Activated CD8-positive, alpha-beta T cell treated with anti-CD3 and anti-CD28 coated beads for 36 hours (primary cell): ENCODE measurements at regions of chr11 and their contacts with region 1.

Region 1: GRCh38 chr11:47152953-47153950 is 23.4 kb downstream of the ARFGAP2 start:
- DNase-seq: peak; percentile 69
- ATAC-seq: peak; percentile 74
- H3K4me3 Mint-ChIP-seq: no peak overlapping the region
- H3K27ac Mint-ChIP-seq: peak overlapping the region; percentile 70
- H3K4me1 Mint-ChIP-seq: peaks cover 27% of the 10 kb centered on the region
- H3K27me3 Mint-ChIP-seq: no peaks in the 10 kb centered on the region
- CTCF ChIP-seq: peak; percentile 99

Region 2: GRCh38 chr11:46637546-46637945 is 515.7 kb before region 1 on chr11:
- CTCF ChIA-PET with region 1: no interaction called
- POLR2A ChIA-PET with region 1: no interaction called
- intact Hi-C with region 1: no loop called
- DNase-seq: no peak
- ATAC-seq: no peak
- H3K4me3 Mint-ChIP-seq: no peak overlapping the region
- H3K27ac Mint-ChIP-seq: no peak overlapping the region
- H3K4me1 Mint-ChIP-seq: peaks cover 12% of the 10 kb centered on the region
- H3K27me3 Mint-ChIP-seq: no peaks in the 10 kb centered on the region
- CTCF ChIP-seq: no peak

Region 3: DNA sequence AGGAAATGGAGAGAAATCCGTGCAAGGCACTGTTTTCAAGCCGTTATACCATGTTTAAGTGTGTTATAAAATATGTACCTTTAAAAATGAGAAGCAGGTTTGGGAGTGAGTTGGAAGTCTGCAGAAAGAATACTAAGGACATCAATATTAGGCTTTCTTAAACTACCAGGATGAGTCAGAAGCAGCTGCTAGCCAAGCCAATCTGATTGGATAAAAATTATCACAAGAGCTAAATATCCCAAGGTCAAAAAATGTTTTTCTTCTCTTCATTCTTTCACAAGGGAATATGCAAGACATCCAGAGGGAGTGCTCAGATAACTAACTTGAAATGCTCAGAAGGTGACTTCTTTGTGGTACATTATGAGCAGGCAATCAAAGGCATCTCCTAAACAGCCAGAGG is 287.9 kb before region 1 on chr11:
- CTCF ChIA-PET with region 1: interaction called, 12 read pairs
- POLR2A ChIA-PET with region 1: no interaction called
- intact Hi-C with region 1: no loop called
- DNase-seq: no peak
- ATAC-seq: no peak
- H3K4me3 Mint-ChIP-seq: no peak overlapping the region
- H3K27ac Mint-ChIP-seq: no peak overlapping the region
- H3K4me1 Mint-ChIP-seq: no peaks in the 10 kb centered on the region
- H3K27me3 Mint-ChIP-seq: peaks cover 3% of the 10 kb centered on the region
- CTCF ChIP-seq: no peak

Region 4: GRCh38 chr11:46889689-46890475 is 263.4 kb before region 1 on chr11:
- CTCF ChIA-PET with region 1: interaction called, 38 read pairs
- POLR2A ChIA-PET with region 1: no interaction called
- intact Hi-C with region 1: loop called (anchors 1 kb)
- DNase-seq: peak; percentile 88
- ATAC-seq: peak; percentile 97
- H3K4me3 Mint-ChIP-seq: no peak overlapping the region
- H3K27ac Mint-ChIP-seq: no peak overlapping the region
- H3K4me1 Mint-ChIP-seq: no peaks in the 10 kb centered on the region
- H3K27me3 Mint-ChIP-seq: no peaks in the 10 kb centered on the region
- CTCF ChIP-seq: peak; percentile 81

Region 5: DNA sequence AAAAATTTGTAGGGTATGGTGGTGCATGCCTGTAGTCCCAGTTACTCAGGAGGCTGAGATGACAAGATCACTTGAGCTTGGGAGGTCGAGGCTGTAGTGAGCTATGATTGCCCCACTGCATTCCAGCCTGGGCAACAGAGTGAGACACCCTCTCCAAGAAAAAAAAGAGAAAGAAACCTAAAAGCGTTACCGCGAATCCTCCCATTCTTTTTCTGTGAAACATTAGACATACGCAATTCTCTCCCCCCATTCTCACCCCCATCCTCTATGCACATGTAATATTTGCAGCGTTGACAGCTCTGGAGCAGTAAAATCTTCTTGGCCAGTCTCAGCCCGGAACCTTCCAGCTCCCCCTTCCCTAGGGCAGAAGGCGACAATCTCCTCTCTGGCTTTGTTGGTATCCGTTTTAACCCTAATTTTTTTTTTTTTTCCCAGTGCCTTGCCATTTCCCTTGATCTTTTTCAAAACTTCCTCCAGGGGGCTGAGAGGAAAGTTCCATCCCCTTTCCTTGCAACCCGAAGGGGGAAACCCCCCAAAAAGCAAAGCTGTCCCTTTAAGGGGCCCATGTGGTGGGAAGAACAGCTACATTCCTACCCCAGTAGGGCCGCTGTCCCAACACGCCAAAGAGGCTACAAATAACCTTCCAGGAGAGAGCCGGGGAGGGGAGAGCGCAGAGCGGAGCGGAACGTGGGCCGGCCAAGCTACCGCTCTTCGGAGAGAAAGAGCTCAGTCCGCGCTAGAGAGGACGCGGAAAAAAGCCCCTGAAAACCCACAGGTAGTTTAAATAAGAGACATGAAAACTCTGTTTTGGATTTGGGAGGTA is 236.8 kb before region 1 on chr11:
- CTCF ChIA-PET with region 1: interaction called, 33 read pairs
- POLR2A ChIA-PET with region 1: no interaction called
- intact Hi-C with region 1: no loop called
- DNase-seq: peak; percentile 37
- ATAC-seq: peak; percentile 43
- H3K4me3 Mint-ChIP-seq: peak overlapping the region; percentile 69
- H3K27ac Mint-ChIP-seq: no peak overlapping the region
- H3K4me1 Mint-ChIP-seq: peaks cover 23% of the 10 kb centered on the region
- H3K27me3 Mint-ChIP-seq: peaks cover 50% of the 10 kb centered on the region
- CTCF ChIP-seq: no peak

Region 6: DNA sequence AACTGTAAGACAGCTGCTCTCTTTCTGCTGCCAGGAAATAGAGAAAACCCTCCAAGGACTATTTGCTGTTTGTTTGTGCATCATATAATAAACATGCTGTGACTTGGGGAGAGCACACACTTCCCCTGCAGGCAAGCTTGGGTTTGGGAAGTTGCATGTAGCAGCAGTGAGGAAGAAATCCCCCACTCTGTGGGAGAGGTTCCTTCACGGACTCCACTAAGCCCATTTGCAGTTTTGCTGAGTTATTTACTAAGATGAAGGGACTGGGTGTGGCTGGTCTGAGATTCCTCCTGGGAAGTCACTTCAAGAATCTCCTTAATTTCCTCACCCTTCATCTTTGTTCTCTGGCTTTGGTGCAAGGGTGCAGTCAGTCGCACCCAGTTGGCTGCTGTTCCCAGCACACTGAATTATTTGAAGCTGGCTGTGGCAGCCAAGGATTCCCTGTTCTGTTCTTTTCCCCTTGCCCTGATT is 81.4 kb before region 1 on chr11:
- CTCF ChIA-PET with region 1: interaction called, 12 read pairs
- POLR2A ChIA-PET with region 1: interaction called, 4 read pairs
- intact Hi-C with region 1: no loop called
- DNase-seq: no peak
- ATAC-seq: no peak
- H3K4me3 Mint-ChIP-seq: no peak overlapping the region
- H3K27ac Mint-ChIP-seq: no peak overlapping the region
- H3K4me1 Mint-ChIP-seq: no peaks in the 10 kb centered on the region
- H3K27me3 Mint-ChIP-seq: no peaks in the 10 kb centered on the region
- CTCF ChIP-seq: no peak

Region 7: DNA sequence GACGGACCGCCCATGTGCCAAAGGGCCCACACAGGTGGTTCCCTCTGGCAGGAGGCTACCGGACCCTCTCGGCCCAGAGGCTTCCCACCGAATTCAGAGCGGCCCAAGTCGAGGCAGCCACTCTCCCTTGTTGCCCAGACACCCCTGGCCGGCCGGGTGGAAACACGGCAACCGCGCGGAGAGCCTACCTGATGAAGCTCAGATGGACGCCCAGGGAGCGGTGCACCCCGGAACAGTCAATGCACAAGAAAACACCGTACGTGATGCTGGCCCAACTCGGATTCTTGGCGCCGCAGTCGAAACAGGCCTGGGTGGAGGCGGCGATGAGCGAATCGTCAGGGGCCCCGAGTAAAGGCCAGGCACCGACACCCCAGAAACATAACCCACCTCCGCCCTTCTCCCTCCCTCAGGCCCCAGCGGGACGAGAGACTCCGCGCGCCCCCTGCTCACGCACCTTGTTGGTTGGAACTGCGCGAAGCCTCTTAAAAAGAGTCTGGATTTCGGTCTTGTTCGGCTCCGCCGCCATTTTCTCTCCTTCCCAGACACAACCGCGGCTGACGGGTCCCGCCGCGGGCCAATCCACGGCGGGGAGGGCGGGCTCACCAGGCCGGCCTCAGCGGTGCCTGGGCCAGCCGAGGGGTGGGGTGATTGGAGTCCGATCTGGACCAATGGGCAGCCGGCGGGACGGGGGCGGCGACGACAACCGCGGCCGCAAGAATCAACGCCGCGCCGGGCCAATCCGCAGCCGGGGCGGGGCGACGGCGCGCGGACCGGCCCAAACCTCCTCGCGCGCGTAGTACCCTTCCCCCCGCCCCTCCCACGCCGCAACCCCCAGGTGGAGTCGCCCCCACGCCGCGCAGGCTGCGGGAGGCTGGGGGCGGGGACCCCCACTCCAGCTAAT is 23.3 kb after region 1 on chr11 and contains the start of gene ARFGAP2:
- CTCF ChIA-PET with region 1: interaction called, 10 read pairs
- POLR2A ChIA-PET with region 1: interaction called, 5 read pairs
- intact Hi-C with region 1: no loop called
- DNase-seq: peak; percentile 97
- ATAC-seq: peak; percentile 94
- H3K4me3 Mint-ChIP-seq: peak within 1 kb of the TSS; percentile 94
- H3K27ac Mint-ChIP-seq: peak within 1 kb of the TSS; percentile 100
- H3K4me1 Mint-ChIP-seq: peaks cover 43% of the 10 kb centered on the region
- H3K27me3 Mint-ChIP-seq: no peaks in the 10 kb centered on the region
- CTCF ChIP-seq: no peak
- total RNA-seq, gene ARFGAP2: 70.1 to 71.7 TPM

Region 8: DNA sequence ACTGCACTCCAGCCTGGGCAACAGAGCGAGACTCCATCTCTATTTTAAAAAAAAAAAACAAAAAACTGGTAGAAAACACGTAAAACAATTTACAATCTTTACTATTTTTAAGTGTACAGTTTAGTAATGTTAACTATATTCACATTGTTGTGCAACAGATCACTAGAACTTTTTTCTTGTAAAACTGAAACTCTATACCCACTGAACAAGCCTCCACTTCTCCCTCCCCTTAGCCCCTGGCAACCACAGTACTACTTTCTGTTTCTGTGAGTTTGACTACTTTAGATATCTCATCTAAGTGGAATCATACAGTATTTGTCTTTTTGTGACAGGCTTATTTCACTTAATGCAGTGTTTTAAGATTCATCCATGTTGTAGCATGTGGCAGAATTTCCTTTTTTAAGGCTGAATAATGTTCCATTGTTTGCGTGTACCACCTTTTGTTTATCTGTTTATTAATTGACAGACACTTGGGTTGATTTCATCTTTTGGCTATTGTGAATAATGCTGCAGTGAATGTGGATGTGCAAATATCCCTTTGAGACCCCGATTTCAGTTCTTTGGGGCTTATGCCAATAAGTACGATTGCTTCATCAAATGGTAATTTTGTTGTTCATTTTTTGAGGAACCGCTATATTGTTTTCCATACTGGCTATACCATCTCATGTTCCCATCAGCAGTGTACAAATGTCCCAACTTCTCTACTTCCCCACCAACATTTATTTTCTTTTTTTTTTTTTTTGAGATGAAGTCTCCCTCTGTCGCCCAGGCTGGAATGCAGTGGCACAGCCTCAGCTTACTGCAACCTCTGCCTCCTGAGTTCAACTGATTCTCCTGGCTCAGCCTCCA is 72.5 kb after region 1 on chr11:
- CTCF ChIA-PET with region 1: no interaction called
- POLR2A ChIA-PET with region 1: no interaction called
- intact Hi-C with region 1: no loop called
- DNase-seq: peak; percentile 54
- ATAC-seq: peak; percentile 96
- H3K4me3 Mint-ChIP-seq: peak overlapping the region; percentile 38
- H3K27ac Mint-ChIP-seq: peak overlapping the region; percentile 74
- H3K4me1 Mint-ChIP-seq: peaks cover 29% of the 10 kb centered on the region
- H3K27me3 Mint-ChIP-seq: no peaks in the 10 kb centered on the region
- CTCF ChIP-seq: no peak

Region 9: GRCh38 chr11:47253660-47254059 is 100.4 kb after region 1 on chr11:
- CTCF ChIA-PET with region 1: no interaction called
- POLR2A ChIA-PET with region 1: no interaction called
- intact Hi-C with region 1: no loop called
- DNase-seq: no peak
- ATAC-seq: no peak
- H3K4me3 Mint-ChIP-seq: no peak overlapping the region
- H3K27ac Mint-ChIP-seq: no peak overlapping the region
- H3K4me1 Mint-ChIP-seq: peaks cover 21% of the 10 kb centered on the region
- H3K27me3 Mint-ChIP-seq: no peaks in the 10 kb centered on the region
- CTCF ChIP-seq: no peak